Naive thymus-derived CD4-positive, alpha-beta T cell (primary cell): ENCODE measurements at regions of chr18 and their contacts with region 1.

Region 1: DNA sequence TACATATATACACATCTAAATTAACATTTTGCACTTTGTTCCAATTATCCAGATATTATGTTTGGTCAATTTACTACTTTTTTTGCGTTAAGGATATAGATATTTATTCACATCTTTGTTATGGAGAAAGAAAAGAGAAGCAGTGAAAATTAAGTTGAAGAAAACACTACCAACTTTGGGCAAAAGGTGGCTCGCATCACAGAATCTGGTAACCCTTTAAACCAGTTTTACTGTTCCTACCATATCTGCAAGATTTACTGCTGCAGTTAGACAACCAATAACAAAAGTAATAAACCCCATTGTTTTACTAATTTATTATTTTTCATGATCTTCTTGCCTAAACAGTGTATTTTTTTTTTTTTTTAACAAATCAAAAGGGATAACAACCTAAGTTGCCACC is 53.6 kb downstream of the SMAD2 start:
- DNase-seq: peak in 2 of 9 donors; percentile 10 to 18
- ATAC-seq: no peak
- H3K4me3 ChIP-seq: no peak overlapping the region
- H3K4me3 Mint-ChIP-seq: no peak overlapping the region
- H3K27ac ChIP-seq: no peak overlapping the region
- H3K27ac Mint-ChIP-seq: peak overlapping the region in 4 of 9 donors; percentile 8 to 42 (median 15)
- H3K4me1 ChIP-seq: no peaks in the 10 kb centered on the region
- H3K4me1 Mint-ChIP-seq: peaks cover 20 to 76% (median 68%) of the 10 kb centered on the region in 7 donors
- H3K27me3 ChIP-seq: no peaks in the 10 kb centered on the region
- H3K27me3 Mint-ChIP-seq: no peaks in the 10 kb centered on the region

Region 2: GRCh38 chr18:47893939-47894699 is 17.3 kb after region 1 on chr18:
- CTCF ChIA-PET with region 1: interaction called, 3 read pairs
- POLR2A ChIA-PET with region 1: interaction called, 10 read pairs
- intact Hi-C with region 1: loop called in 1 of 2 experiments (anchors 2 kb)
- DNase-seq: no peak
- ATAC-seq: no peak
- H3K4me3 ChIP-seq: no peak overlapping the region
- H3K4me3 Mint-ChIP-seq: no peak overlapping the region
- H3K27ac ChIP-seq: no peak overlapping the region
- H3K27ac Mint-ChIP-seq: peak overlapping the region in 3 of 9 donors; percentile 12 to 39 (median 34)
- H3K4me1 ChIP-seq: peaks cover 0 to 2% of the 10 kb centered on the region in 2 donors
- H3K4me1 Mint-ChIP-seq: peaks cover 31 to 66% (median 57%) of the 10 kb centered on the region in 7 donors
- H3K27me3 ChIP-seq: no peaks in the 10 kb centered on the region
- H3K27me3 Mint-ChIP-seq: no peaks in the 10 kb centered on the region

Region 3: DNA sequence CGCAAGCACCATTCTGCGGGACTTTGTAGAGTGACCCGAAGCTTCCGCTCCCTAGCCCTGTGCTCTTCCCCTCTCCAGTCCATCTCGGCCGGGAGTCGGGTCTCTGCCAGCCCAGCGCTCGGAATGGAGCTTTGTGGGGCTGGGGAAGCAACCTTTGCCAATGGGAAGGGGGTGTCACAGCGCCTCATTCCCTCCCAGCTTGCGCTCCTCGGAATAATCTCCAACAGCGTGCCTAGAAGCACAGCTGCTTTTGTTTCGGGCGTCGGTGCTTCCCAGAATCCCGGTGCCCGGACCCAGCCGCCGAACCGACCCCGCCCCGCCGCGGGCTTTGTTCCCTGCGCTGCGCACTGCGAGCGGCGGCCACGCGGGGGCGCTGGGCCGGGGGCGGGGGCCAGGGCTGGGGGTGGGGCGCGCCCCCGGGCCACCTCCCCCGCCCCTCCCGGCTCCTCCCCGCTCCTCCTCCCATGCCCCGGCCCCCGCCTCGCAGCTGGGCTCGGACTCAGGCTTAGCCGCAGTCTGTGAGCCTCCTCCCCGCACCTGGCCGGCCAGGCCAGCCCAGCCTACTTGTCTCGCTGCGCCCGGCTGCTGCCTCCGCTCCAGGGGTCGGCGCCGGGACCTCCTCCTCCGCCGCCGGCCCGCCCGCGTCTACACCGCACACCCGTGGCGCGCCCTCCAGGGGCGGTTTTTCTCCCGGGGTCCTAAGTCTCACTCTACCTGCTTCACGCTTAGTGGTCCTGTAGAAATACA is 131.3 kb after region 1 on chr18:
- CTCF ChIA-PET with region 1: no interaction called
- POLR2A ChIA-PET with region 1: no interaction called
- intact Hi-C with region 1: loop called in 1 of 2 experiments (anchors 5 kb)
- DNase-seq: peak; percentile 12 to 57 (median 42)
- ATAC-seq: peak; percentile 92
- H3K4me3 ChIP-seq: peak overlapping the region; percentile 39
- H3K4me3 Mint-ChIP-seq: peak overlapping the region; percentile 72 to 83 (median 76)
- H3K27ac ChIP-seq: no peak overlapping the region
- H3K27ac Mint-ChIP-seq: peak overlapping the region in 1 of 9 donors; percentile 31
- H3K4me1 ChIP-seq: peaks cover 3 to 6% of the 10 kb centered on the region in 2 donors
- H3K4me1 Mint-ChIP-seq: peaks cover 0 to 8% (median 6%) of the 10 kb centered on the region in 7 donors
- H3K27me3 ChIP-seq: no peaks in the 10 kb centered on the region
- H3K27me3 Mint-ChIP-seq: peaks cover 13 to 40% (median 22%) of the 10 kb centered on the region in 5 donors

Region 4: GRCh38 chr18:48022531-48023329 is 145.9 kb after region 1 on chr18:
- CTCF ChIA-PET with region 1: no interaction called
- POLR2A ChIA-PET with region 1: no interaction called
- intact Hi-C with region 1: loop called in 1 of 2 experiments (anchors 5 kb)
- DNase-seq: peak in 7 of 9 donors; percentile 10 to 56 (median 39)
- ATAC-seq: peak; percentile 74
- H3K4me3 ChIP-seq: no peak overlapping the region
- H3K4me3 Mint-ChIP-seq: no peak overlapping the region
- H3K27ac ChIP-seq: no peak overlapping the region
- H3K27ac Mint-ChIP-seq: no peak overlapping the region
- H3K4me1 ChIP-seq: no peaks in the 10 kb centered on the region
- H3K4me1 Mint-ChIP-seq: peaks cover 0 to 8% (median 0%) of the 10 kb centered on the region in 7 donors
- H3K27me3 ChIP-seq: no peaks in the 10 kb centered on the region
- H3K27me3 Mint-ChIP-seq: peaks cover 24 to 55% (median 31%) of the 10 kb centered on the region in 5 donors